ENCODE measurements at regions of chr3 and their contacts with region 1.

Region 1: GRCh38 chr3:129316131-129317013 is 37.7 kb downstream of the HMCES start:
- DNase-seq: peak; percentile 90
- H3K4me3 Mint-ChIP-seq: peak overlapping the region; percentile 95
- H3K27ac Mint-ChIP-seq: peak overlapping the region; percentile 79
- H3K4me1 Mint-ChIP-seq: peaks cover 34% of the 10 kb centered on the region
- H3K27me3 Mint-ChIP-seq: no peaks in the 10 kb centered on the region

Region 2: GRCh38 chr3:128969993-128970739 is 346.2 kb before region 1 on chr3:
- CTCF ChIA-PET with region 1: interaction called, 12 read pairs
- POLR2A ChIA-PET with region 1: interaction called, 10 read pairs
- DNase-seq: peak; percentile 69
- H3K4me3 Mint-ChIP-seq: no peak overlapping the region
- H3K27ac Mint-ChIP-seq: no peak overlapping the region
- H3K4me1 Mint-ChIP-seq: peaks cover 10% of the 10 kb centered on the region
- H3K27me3 Mint-ChIP-seq: peaks cover 9% of the 10 kb centered on the region

Region 3: DNA sequence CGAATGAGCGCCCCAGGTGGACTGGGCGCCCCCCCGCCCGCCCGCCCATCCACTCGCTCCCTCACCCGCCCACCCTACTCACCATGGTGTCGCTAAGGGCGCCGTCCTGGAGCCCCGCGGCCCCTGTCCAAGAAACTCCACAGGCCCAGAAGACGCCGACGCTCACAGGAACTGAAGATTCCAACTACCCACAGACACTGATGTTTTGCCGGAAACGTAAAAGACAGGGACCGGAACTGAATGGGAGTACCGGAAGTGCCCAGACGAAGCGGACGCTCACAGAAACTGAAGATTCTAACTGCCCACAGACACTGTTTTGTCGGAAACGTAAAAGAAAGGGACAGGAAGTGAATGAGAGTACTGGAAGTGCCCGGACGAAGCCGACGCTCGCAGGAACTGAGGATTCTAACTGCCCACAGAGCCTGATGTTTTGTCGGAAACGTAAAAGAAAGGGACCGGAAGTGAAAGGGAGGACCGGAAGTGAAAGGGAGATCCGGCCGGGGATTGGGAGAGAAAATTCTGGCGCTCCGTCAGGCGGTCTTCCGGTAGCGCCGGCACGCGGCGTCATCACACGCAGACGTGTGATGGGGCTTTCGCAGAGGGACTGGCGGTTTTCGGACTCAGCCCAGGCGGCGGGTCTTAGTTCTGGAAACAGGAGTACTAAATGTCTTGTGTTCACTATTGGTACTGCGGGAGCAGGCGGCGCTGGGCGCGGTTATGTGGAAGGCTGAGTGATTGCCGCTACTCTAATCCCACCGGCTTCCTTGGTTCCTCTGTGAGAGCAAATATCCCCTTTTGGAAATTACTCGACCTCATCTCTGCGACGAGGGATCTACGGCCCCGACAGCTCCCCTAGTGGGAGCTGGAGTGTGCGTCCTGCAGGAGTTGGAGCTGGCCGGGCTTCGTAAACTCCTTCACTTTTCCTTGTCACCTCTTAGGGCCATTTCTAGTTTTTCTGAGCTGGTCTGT is 155.2 kb before region 1 on chr3 and contains the start of gene ISY1:
- CTCF ChIA-PET with region 1: interaction called, 9 read pairs
- POLR2A ChIA-PET with region 1: interaction called, 13 read pairs
- DNase-seq: peak; percentile 88
- H3K4me3 Mint-ChIP-seq: peak within 1 kb of the TSS; percentile 87
- H3K27ac Mint-ChIP-seq: peak within 1 kb of the TSS; percentile 94
- H3K4me1 Mint-ChIP-seq: peaks cover 45% of the 10 kb centered on the region
- H3K27me3 Mint-ChIP-seq: no peaks in the 10 kb centered on the region
- total RNA-seq, gene ISY1: 63.9 to 66.2 TPM

Region 4: DNA sequence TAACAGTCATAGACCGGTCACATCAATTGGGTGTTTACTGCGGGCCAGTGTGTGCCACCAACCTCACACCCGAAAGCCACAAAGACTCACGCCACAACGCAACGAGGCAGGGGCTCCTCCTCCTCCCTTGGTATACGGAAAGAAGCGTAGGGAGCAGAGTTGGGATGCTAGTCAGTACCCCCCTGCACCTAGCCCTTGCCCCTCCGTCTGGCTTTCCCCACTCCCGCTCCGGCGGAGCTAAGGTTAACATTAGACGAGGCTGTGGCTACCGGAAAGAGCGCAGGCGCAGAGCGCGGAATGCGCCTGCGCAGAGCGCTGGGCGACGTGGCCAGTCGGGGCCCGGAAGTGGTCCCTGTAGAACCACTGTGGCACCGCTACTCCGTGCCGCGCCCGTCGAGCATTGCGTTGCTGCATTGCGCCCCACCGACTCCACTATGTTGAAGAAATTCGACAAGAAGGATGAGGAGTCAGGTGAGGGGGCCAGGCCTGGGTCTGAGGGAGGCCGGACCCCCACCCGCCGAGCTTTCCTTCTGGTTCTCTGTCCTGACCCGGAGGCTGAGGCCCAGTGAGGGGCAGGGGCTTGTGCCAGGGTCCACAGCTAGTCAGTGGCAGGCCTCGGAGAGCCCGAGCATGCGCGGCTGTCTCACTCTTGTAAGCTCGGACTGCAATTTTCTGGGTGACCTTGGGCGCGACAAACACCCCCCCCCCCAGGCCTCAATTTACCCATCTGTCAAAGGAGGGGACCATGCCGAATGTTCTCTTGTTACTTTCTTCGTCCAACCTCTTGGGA is 66.9 kb before region 1 on chr3 and contains the start of gene COPG1:
- CTCF ChIA-PET with region 1: interaction called, 9 read pairs
- POLR2A ChIA-PET with region 1: interaction called, 53 read pairs
- DNase-seq: peak; percentile 90
- H3K4me3 Mint-ChIP-seq: peak within 1 kb of the TSS; percentile 86
- H3K27ac Mint-ChIP-seq: peak within 1 kb of the TSS; percentile 92
- H3K4me1 Mint-ChIP-seq: peaks cover 63% of the 10 kb centered on the region
- H3K27me3 Mint-ChIP-seq: no peaks in the 10 kb centered on the region
- total RNA-seq, gene COPG1: 157 TPM

Region 5: DNA sequence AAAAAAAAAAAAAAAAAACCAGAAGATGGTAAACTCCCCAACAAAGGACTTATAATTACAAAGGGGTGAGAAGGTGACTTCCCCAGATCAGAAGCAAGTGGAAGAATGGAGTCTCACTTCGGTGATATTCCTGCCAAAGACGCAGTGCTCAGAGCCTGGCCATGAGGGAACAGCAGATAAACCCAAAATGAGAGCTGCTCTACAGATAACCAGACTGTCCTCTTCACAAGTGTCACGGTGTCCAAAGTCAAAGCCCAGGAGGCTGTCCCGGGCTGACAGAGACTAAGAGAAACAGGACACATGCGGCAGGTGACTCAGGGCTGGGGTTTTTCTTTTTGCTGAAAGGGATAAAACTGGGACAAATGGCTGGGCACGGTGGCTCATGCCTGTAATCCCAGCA is 11.1 kb after region 1 on chr3:
- CTCF ChIA-PET with region 1: interaction called, 7 read pairs
- POLR2A ChIA-PET with region 1: interaction called, 23 read pairs
- DNase-seq: no peak
- H3K4me3 Mint-ChIP-seq: no peak overlapping the region
- H3K27ac Mint-ChIP-seq: no peak overlapping the region
- H3K4me1 Mint-ChIP-seq: no peaks in the 10 kb centered on the region
- H3K27me3 Mint-ChIP-seq: peaks cover 5% of the 10 kb centered on the region

Region 6: DNA sequence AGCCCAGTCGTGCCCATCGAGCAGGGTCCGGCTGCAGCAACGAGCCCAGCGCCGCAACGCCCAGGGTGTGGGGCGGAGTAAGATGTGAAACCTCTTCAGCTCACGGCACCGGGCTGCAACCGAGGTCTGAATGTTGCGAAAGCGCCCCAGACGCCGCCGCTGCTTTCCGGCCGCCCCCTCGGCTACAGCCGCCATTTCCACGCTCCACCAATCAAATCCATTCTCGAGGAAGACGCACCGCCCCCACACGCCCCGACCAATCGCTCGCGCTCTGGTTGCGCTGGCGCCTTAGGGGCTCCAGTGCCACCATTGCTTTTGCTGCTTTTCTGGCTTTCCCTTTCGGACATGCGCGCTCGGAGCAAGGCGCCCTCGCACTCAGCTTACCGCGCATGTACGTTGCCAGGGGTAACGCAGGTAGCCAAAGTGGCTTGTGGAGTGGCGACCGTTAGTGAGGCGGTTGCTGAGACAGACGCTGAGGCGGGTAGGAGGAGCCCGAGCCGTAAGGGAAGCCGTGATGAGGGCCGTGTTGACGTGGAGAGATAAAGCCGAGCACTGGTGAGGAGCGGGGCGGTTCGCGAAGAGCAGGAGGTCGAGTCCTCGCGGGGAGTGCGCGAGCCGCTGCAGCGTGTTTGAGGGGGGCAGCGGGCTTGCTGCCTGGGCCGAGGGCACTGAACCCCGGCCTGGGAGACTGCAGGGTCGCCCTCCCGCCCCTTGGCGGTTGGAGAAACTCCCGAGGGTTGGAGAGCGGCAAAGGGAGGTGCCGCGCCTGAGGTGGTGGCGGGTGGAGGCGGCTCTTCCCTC is 123.6 kb after region 1 on chr3 and contains the starts of genes IFT122 and MBD4:
- CTCF ChIA-PET with region 1: interaction called, 6 read pairs
- POLR2A ChIA-PET with region 1: interaction called, 76 read pairs
- DNase-seq: peak; percentile 100
- H3K4me3 Mint-ChIP-seq: peak within 1 kb of the TSS; percentile 87
- H3K27ac Mint-ChIP-seq: peak within 1 kb of the TSS; percentile 94
- H3K4me1 Mint-ChIP-seq: peaks cover 66% of the 10 kb centered on the region
- H3K27me3 Mint-ChIP-seq: no peaks in the 10 kb centered on the region
- total RNA-seq, gene IFT122: 22.6 to 22.8 TPM
- total RNA-seq, gene MBD4: 47.1 to 47.4 TPM